Activated naive CD4-positive, alpha-beta T cell treated with anti-CD3 and anti-CD28 coated beads for 36 hours (primary cell): ENCODE measurements at regions of chr4 and their contacts with region 1.

Region 1: GRCh38 chr4:38179690-38180377 is 219.6 kb downstream of the PTTG2 start:
- DNase-seq: peak; percentile 86
- H3K4me3 Mint-ChIP-seq: no peak overlapping the region
- H3K27ac Mint-ChIP-seq: no peak overlapping the region
- H3K4me1 Mint-ChIP-seq: peaks cover 33% of the 10 kb centered on the region
- H3K27me3 Mint-ChIP-seq: no peaks in the 10 kb centered on the region

Region 2: DNA sequence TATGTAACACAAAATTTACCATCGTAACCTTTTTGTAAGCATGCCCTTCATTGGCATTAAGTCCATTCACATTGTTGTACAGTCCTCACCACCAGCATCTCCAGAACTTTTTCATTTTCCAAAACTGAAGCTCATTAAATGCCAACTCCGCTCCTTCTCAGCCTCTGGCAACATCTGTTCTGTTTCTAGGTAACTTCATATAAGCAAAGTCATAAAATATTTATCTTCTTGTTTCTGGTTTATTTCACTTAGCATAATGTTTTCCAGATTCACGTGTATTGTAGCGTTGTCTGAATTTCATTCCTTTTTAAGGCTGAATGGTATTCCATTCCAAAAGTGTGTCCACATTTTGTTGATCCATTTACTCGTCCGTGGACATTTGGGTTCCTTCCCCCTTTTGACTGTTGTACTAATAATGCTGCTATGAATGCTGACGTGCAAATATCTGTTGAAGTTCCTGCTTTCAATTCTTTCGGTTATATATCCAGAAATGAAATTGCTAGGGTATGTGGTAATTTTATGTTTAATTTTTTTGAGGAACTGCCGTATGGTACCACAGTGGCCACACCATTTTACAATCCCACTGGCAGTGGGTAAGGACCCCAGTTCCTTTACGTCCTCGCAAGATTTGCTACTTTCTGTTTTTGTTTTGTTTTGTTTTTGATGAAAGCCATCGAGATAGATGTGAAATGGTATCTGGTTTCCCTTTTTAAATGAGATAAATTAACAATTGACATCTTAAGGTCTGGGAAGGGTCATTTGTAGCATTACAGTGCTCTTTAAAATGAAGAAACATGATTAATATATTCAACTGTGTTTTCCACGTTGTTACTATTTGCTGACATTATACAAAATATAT is 156.3 kb before region 1 on chr4:
- CTCF ChIA-PET with region 1: no interaction called
- intact Hi-C with region 1: no loop called
- DNase-seq: no peak
- H3K4me3 Mint-ChIP-seq: no peak overlapping the region
- H3K27ac Mint-ChIP-seq: no peak overlapping the region
- H3K4me1 Mint-ChIP-seq: peaks cover 7% of the 10 kb centered on the region
- H3K27me3 Mint-ChIP-seq: no peaks in the 10 kb centered on the region

Region 3: DNA sequence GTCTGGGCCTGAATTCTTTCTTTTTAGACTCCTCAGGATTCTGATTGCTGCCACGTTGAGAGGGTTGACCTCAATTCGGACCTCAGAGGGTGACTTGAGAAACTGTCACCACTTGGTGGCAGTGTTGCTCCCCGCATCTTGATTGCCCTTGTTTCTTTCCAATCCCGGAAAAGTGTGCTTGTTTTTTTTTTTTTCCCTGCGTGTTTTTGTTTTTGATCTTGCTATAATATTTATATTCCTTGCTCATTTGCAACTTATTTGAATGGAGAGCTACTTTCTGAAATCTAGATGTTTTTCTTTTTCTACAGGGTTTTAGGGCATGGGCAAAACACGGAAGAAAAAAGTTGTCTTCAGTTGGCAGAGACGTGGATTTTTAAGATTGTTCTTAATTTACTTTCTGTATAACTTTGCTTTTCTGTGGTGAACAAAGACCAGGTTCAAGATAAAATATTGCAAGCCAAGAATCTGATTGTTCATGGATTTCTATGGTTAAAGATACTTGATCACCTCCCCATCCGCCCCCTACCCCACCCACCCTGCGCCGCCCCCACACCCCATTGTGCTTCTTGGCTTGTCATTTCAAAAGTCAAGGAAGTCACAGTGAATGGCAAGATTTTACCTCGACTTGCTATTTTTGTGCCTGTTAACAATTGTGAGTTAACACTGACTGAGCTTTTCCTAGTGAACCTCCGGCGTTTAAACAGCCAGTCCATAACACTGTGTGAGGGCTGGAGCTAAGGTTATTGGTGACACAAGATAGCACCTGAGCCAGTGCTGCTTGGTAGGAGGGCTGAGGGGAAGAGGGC is 117.5 kb before region 1 on chr4:
- CTCF ChIA-PET with region 1: interaction called, 11 read pairs
- intact Hi-C with region 1: loop called (anchors 1 kb)
- DNase-seq: peak; percentile 84
- H3K4me3 Mint-ChIP-seq: peak overlapping the region; percentile 79
- H3K27ac Mint-ChIP-seq: peak overlapping the region; percentile 75
- H3K4me1 Mint-ChIP-seq: peaks cover 12% of the 10 kb centered on the region
- H3K27me3 Mint-ChIP-seq: no peaks in the 10 kb centered on the region

Region 4: GRCh38 chr4:38230121-38230801 is 50.4 kb after region 1 on chr4:
- CTCF ChIA-PET with region 1: interaction called, 10 read pairs
- intact Hi-C with region 1: no loop called
- DNase-seq: no peak
- H3K4me3 Mint-ChIP-seq: no peak overlapping the region
- H3K27ac Mint-ChIP-seq: no peak overlapping the region
- H3K4me1 Mint-ChIP-seq: no peaks in the 10 kb centered on the region
- H3K27me3 Mint-ChIP-seq: no peaks in the 10 kb centered on the region

Region 5: DNA sequence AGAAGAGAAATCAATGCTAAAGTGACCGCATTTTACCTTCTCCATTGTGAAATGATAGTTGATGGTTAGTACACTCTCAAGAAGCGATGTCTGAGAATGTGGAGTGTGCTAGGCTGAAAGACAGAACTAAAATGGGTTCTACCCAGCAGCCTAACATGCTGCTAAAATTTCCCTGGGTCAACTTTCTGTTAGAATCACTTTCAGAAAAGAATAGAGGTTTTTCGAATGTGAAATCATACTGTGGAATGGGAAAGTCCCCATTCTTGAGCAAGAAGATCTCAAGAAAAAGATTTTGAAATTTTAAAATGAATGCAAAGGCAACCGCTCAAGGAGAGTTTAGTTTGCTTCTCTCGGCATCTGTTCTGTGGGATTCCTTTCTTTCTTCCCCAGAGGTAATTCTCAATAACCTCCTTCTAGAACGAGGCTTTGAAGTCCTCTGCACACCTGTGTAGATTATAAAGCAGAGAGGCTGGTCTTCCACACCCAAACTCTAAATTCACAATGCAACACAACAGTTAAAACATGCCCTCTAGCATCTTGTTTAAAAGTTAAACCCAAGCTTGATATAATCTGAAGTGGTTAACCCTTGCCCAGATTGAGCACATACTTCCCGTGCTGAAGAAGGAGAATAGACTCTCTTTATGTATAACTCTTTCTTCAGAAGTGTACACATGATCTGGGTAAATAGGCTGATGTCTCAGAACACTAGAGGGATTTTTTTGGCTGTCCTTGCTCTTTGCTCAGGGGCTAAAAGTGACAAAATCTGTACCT is 275.4 kb after region 1 on chr4:
- CTCF ChIA-PET with region 1: no interaction called
- intact Hi-C with region 1: loop called (anchors 10 kb)
- DNase-seq: peak; percentile 11
- H3K4me3 Mint-ChIP-seq: no peak overlapping the region
- H3K27ac Mint-ChIP-seq: peak overlapping the region; percentile 82
- H3K4me1 Mint-ChIP-seq: peaks cover 52% of the 10 kb centered on the region
- H3K27me3 Mint-ChIP-seq: no peaks in the 10 kb centered on the region

Region 6: GRCh38 chr4:38687571-38688011 is 507.8 kb after region 1 on chr4:
- CTCF ChIA-PET with region 1: interaction called, 16 read pairs
- intact Hi-C with region 1: no loop called
- DNase-seq: peak; percentile 50
- H3K4me3 Mint-ChIP-seq: no peak overlapping the region
- H3K27ac Mint-ChIP-seq: peak overlapping the region; percentile 78
- H3K4me1 Mint-ChIP-seq: peaks cover 62% of the 10 kb centered on the region
- H3K27me3 Mint-ChIP-seq: no peaks in the 10 kb centered on the region

Region 7: DNA sequence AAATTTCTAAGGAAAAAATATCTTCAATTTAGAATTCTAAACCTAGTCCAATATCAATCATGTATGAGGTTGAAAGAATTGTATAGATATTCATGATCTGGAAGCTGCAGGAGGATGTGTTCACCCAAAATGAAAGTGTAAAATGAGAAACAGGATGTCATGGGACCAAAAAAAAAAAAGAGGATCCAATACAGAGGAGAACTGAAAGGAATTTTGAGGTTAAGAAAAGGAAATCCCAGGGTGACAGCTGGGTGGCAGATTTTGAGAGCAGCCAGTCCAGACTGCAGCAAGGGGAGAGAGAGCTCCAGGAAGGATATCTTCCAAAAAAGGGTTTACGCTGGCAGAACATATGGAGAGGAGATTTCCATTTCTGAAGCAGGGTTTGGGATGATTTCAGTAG is 564.0 kb after region 1 on chr4:
- CTCF ChIA-PET with region 1: interaction called, 16 read pairs
- intact Hi-C with region 1: no loop called
- DNase-seq: no peak
- H3K4me3 Mint-ChIP-seq: no peak overlapping the region
- H3K27ac Mint-ChIP-seq: no peak overlapping the region
- H3K4me1 Mint-ChIP-seq: peaks cover 8% of the 10 kb centered on the region
- H3K27me3 Mint-ChIP-seq: peaks cover 4% of the 10 kb centered on the region

Region 8: GRCh38 chr4:38856524-38857337 is 676.9 kb after region 1 on chr4 and contains the start of gene TLR6:
- CTCF ChIA-PET with region 1: interaction called, 3 read pairs
- intact Hi-C with region 1: loop called (anchors 2 kb)
- DNase-seq: peak; percentile 86
- H3K4me3 Mint-ChIP-seq: peak within 1 kb of the TSS; percentile 66
- H3K27ac Mint-ChIP-seq: peak within 1 kb of the TSS; percentile 84
- H3K4me1 Mint-ChIP-seq: peaks cover 35% of the 10 kb centered on the region
- H3K27me3 Mint-ChIP-seq: no peaks in the 10 kb centered on the region
- total RNA-seq, gene TLR6: 3.6 TPM